ENCODE measurements at regions of chr1 and their contacts with region 1.

Region 1: GRCh38 chr1:28248283-28249012 is 10.9 kb upstream of the SESN2 start:
- DNase-seq: peak; percentile 92
- ATAC-seq: peak; percentile 31
- H3K4me3 Mint-ChIP-seq: peak overlapping the region; percentile 82
- H3K27ac Mint-ChIP-seq: peak overlapping the region; percentile 83
- H3K4me1 Mint-ChIP-seq: peaks cover 54% of the 10 kb centered on the region
- H3K27me3 Mint-ChIP-seq: no peaks in the 10 kb centered on the region

Region 2: DNA sequence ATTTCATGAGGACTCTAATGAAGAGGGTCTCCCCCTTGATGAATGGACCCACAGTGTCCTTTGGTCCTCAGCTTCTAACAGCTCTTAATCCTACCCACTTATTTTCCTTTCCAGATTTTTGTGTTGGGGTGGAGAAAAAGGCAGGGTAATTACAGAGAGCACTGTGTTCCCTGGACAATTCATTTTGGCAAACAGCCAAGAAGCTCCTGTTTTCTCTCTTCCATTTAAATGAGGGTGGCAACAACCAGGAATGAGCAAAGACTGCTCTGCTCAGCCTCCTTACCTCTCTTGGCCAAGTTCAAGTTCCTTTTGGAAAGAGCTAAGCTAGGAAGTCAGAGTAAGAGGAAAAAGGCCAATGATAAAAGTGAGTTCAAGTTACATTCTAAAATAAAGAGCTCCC is 276.8 kb before region 1 on chr1:
- CTCF ChIA-PET with region 1: no interaction called
- POLR2A ChIA-PET with region 1: interaction called, 13 read pairs
- intact Hi-C with region 1: no loop called
- DNase-seq: no peak
- ATAC-seq: no peak
- H3K4me3 Mint-ChIP-seq: no peak overlapping the region
- H3K27ac Mint-ChIP-seq: no peak overlapping the region
- H3K4me1 Mint-ChIP-seq: peaks cover 22% of the 10 kb centered on the region
- H3K27me3 Mint-ChIP-seq: no peaks in the 10 kb centered on the region

Region 3: GRCh38 chr1:28259307-28260167 is 11.1 kb after region 1 on chr1 and contains the start of gene SESN2:
- CTCF ChIA-PET with region 1: interaction called, 77 read pairs
- POLR2A ChIA-PET with region 1: interaction called, 23 read pairs
- intact Hi-C with region 1: loop called (anchors 1 kb)
- DNase-seq: peak; percentile 100
- ATAC-seq: peak; percentile 93
- H3K4me3 Mint-ChIP-seq: peak within 1 kb of the TSS; percentile 81
- H3K27ac Mint-ChIP-seq: peak within 1 kb of the TSS; percentile 99
- H3K4me1 Mint-ChIP-seq: peaks cover 42% of the 10 kb centered on the region
- H3K27me3 Mint-ChIP-seq: no peaks in the 10 kb centered on the region
- total RNA-seq, gene SESN2: 32.9 to 33.3 TPM

Region 4: GRCh38 chr1:28359592-28360239 is 111.3 kb after region 1 on chr1:
- CTCF ChIA-PET with region 1: interaction called, 19 read pairs
- POLR2A ChIA-PET with region 1: interaction called, 9 read pairs
- intact Hi-C with region 1: loop called in 1 of 2 experiments (anchors 1 kb)
- DNase-seq: peak; percentile 88
- ATAC-seq: peak; percentile 78
- H3K4me3 Mint-ChIP-seq: no peak overlapping the region
- H3K27ac Mint-ChIP-seq: no peak overlapping the region
- H3K4me1 Mint-ChIP-seq: no peaks in the 10 kb centered on the region
- H3K27me3 Mint-ChIP-seq: no peaks in the 10 kb centered on the region

Region 5: GRCh38 chr1:28540651-28541050 is 292.2 kb after region 1 on chr1:
- CTCF ChIA-PET with region 1: no interaction called
- POLR2A ChIA-PET with region 1: no interaction called
- intact Hi-C with region 1: no loop called
- DNase-seq: no peak
- ATAC-seq: no peak
- H3K4me3 Mint-ChIP-seq: no peak overlapping the region
- H3K27ac Mint-ChIP-seq: no peak overlapping the region
- H3K4me1 Mint-ChIP-seq: no peaks in the 10 kb centered on the region
- H3K27me3 Mint-ChIP-seq: no peaks in the 10 kb centered on the region

Region 6: DNA sequence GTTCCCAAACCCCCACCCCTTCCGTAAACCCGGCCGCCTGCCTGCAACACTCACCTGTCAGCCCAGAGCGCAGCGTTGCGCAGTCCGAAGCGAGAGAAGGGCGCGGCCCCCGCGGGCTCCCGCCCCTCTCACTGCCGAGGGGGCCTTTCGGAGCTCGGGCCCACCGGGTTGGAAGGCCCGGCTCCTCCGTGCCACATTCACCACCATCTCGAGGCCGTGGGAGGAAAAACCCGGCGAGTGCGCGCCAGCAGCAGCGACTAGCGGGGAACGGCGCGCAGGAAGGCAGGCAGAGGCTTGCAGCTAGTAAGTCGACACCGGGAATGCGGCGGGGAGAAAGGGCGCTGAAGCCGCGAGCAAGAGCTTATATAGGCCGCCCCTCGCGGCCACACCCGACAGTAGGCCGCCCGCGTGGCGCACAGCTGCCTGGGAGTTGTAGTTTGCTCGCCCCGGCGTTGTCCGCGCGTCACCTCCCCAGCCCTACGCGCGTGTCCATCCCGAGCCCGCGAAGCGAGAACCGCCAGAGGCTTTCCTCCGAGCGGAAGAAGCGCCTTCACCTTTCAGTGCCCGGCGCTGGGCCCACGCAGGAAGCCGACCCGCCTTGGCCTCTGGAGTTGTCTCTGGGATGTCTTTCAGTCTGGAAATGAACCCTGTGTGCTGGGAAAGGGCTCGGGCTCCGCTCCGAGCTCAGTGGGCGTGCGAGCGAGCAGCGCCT is 333.2 kb after region 1 on chr1:
- CTCF ChIA-PET with region 1: interaction called, 4 read pairs
- POLR2A ChIA-PET with region 1: interaction called, 3 read pairs
- intact Hi-C with region 1: loop called in 1 of 2 experiments (anchors 1 kb)
- DNase-seq: peak; percentile 97
- ATAC-seq: peak; percentile 91
- H3K4me3 Mint-ChIP-seq: peak overlapping the region; percentile 89
- H3K27ac Mint-ChIP-seq: peak overlapping the region; percentile 95
- H3K4me1 Mint-ChIP-seq: peaks cover 33% of the 10 kb centered on the region
- H3K27me3 Mint-ChIP-seq: no peaks in the 10 kb centered on the region

Region 7: DNA sequence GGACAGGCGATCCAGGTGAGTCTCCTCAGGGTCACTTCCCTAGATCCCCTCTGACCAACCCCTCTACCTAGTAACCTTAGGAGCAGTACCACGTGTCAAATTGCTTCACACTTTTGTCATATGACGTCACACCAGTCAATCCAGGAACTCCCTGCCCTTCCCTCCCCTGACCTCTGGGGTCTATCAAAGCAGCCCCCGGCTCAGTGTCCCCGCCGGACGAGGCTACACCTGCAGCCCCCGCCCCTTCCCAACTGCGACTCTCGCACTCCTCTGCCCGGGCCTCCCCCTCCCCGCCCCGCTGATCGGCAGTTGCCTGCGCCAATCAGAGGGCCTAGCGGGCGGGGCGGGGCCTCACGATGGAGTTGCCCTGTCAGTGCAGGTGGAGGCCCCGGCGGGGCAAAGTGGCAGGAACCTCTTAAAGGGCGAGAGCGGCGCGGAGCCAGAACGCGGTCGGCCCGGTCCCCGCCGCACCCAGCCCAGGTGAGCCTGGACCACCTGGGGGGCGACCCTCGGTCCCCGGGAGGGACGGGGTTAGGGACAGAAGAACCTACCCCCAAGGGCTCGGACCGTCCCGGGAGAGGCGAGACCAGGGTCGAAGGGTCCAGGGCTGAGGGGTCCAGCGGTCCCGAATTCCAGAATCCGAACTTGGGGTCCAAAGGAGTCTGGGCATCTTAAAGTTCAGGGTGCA is 638.4 kb after region 1 on chr1:
- CTCF ChIA-PET with region 1: no interaction called
- POLR2A ChIA-PET with region 1: no interaction called
- intact Hi-C with region 1: loop called in 1 of 2 experiments (anchors 5 kb)
- DNase-seq: peak; percentile 95
- ATAC-seq: peak; percentile 77
- H3K4me3 Mint-ChIP-seq: peak overlapping the region; percentile 90
- H3K27ac Mint-ChIP-seq: peak overlapping the region; percentile 88
- H3K4me1 Mint-ChIP-seq: peaks cover 43% of the 10 kb centered on the region
- H3K27me3 Mint-ChIP-seq: no peaks in the 10 kb centered on the region